Sciatic nerve (tissue), 2 donors: ENCODE measurements at regions of chr6 and their contacts with region 1.

Region 1: DNA sequence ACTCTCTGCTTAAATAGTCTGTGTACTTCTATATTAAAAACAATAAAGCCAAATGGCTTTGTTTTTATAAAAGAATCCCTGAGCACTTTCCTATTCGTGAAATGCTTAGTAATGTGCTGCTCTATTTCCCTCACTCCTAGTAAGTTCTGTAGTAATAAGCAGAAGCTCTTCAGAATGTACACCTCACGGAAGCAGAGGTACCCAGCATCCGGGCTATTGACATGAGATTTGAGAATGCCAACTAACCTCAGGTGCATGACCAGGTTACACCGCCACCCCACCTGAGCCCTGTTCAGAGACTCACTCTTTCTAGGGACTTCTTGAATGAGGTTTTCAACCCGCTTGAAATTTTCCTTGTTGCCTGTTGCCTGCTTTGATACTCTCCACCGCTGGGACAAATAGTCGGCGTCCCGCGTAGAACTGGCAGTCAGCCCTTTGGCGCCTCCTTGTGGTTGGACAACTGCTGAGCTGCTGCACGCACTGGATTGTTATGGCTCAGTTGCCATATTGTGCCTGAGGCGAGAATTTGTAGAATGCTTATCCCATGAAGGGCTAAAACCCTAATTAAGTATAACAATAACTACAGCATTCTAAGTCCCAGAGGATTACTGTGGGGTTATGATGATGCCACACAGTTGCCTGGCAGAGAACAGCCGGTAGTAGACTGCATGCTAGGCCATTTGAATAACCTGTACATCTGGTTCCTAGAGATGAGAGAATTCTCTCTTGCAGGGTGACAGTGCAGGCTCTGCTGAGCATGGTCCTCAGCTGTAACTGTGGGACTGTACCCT is 95.4 kb downstream of the KHDC1L start:
- DNase-seq: peak; percentile 91
- ATAC-seq: peak; percentile 89

Region 2: GRCh38 chr6:72411872-72412708 is 717.8 kb before region 1 on chr6:
- intact Hi-C with region 1: loop called (anchors 5 kb)
- DNase-seq: peak; percentile 81
- ATAC-seq: peak; percentile 79

Region 3: DNA sequence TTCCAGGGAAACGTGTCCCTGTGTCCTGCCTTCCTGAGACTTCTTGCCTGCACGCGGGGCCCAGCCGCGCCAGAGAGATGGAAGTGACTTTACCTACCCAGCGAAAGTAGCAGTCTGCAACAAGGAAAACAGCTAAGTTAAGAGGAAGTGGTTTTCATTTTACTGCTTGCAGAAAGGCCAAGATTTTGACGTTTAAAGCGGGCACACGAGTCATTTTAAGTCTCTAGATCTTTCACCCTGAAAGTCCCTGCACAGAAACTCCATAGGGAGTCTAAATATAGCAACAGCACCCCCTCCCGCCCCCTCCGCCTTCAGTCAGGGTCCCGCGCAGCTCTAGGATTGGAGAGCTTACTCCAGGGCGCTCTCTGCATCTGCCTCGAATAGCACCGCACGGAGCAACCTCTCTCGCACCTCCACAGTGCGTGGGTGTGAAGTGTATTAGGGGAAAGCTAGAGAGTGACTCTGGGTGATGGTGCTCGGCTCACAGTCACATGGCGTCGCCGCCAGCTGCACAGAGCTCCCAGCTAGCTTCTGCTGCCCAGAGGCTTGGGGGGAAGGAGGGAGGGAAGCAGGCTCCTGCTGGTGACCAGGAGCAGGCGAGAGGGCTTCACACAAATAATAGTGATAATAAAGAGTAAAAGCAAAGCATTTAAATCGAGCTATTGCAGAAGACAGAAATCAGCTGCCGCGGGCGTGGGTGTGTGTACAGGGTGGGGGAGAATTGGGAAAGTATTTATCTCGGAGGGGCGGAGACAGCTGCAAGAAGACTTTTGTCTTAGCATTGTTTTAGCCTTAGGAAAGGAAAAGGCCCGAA is 509.8 kb before region 1 on chr6:
- intact Hi-C with region 1: loop called (anchors 10 kb)
- DNase-seq: no peak
- ATAC-seq: peak; percentile 63

Region 4: GRCh38 chr6:73145690-73146089 is 15.8 kb after region 1 on chr6:
- intact Hi-C with region 1: no loop called
- DNase-seq: no peak
- ATAC-seq: no peak